ENCODE measurements at regions of chr4 and their contacts with region 1.

Region 1: GRCh38 chr4:10253755-10254154 is 137.2 kb upstream of the WDR1 start:
- DNase-seq: no peak
- ATAC-seq: no peak
- H3K4me3 ChIP-seq: no peak overlapping the region
- H3K27ac ChIP-seq: no peak overlapping the region
- H3K4me1 ChIP-seq: no peaks in the 10 kb centered on the region
- H3K27me3 ChIP-seq: peaks cover 0 to 3% (median 0%) of the 10 kb centered on the region in 4 donors
- CTCF ChIP-seq: no peak

Region 2: GRCh38 chr4:10013722-10014121 is 240.0 kb before region 1 on chr4:
- intact Hi-C with region 1: no loop called
- DNase-seq: peak in 4 of 6 donors; percentile 40 to 80 (median 63)
- ATAC-seq: peak; percentile 68 to 84 (median 80)
- H3K4me3 ChIP-seq: no peak overlapping the region
- H3K27ac ChIP-seq: no peak overlapping the region
- H3K4me1 ChIP-seq: no peaks in the 10 kb centered on the region
- H3K27me3 ChIP-seq: no peaks in the 10 kb centered on the region
- CTCF ChIP-seq: peak; percentile 26 to 50 (median 31)

Region 3: DNA sequence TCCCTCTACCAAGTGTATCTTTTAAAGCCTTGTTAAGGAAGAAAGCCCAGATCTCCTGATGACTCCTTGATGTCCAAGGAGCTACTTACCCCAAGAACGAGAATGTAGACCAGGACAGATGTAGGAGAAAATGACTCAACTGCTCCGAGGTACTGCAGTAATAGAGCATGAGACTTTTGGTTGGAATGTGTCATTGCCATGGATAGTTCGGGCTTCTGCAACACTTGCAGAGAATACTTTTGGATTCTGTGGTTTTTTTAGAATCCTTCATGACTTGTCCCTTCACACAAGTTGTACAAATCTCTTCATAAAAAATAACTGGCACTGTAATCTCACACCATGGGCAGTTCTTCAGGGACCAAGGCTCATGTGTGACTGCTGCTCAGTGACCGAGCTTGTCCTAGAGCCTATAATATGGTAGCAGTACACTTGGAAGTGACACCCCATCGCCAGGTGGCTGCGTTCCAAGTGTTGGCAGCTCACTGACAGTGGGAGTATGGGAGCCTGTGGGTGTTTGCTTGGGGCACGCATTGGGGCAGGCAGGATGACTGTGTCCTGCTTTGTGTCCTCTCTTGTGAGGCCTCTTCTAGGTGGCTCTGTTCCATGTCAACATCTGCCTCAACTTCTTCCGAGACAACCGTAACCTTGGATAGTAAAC is 49.2 kb before region 1 on chr4:
- intact Hi-C with region 1: loop called in 1 of 3 experiments (anchors 10 kb)
- DNase-seq: no peak
- ATAC-seq: no peak
- H3K4me3 ChIP-seq: no peak overlapping the region
- H3K27ac ChIP-seq: no peak overlapping the region
- H3K4me1 ChIP-seq: no peaks in the 10 kb centered on the region
- H3K27me3 ChIP-seq: no peaks in the 10 kb centered on the region
- CTCF ChIP-seq: no peak

Region 4: GRCh38 chr4:10671366-10671765 is 417.6 kb after region 1 on chr4:
- intact Hi-C with region 1: no loop called
- DNase-seq: no peak
- ATAC-seq: no peak
- H3K4me3 ChIP-seq: no peak overlapping the region
- H3K27ac ChIP-seq: no peak overlapping the region
- H3K4me1 ChIP-seq: no peaks in the 10 kb centered on the region
- H3K27me3 ChIP-seq: no peaks in the 10 kb centered on the region
- CTCF ChIP-seq: no peak

Measured in pancreas (tissue), 10 donors.